ENCODE measurements at regions of chr11 and their contacts with region 1.

Region 1: DNA sequence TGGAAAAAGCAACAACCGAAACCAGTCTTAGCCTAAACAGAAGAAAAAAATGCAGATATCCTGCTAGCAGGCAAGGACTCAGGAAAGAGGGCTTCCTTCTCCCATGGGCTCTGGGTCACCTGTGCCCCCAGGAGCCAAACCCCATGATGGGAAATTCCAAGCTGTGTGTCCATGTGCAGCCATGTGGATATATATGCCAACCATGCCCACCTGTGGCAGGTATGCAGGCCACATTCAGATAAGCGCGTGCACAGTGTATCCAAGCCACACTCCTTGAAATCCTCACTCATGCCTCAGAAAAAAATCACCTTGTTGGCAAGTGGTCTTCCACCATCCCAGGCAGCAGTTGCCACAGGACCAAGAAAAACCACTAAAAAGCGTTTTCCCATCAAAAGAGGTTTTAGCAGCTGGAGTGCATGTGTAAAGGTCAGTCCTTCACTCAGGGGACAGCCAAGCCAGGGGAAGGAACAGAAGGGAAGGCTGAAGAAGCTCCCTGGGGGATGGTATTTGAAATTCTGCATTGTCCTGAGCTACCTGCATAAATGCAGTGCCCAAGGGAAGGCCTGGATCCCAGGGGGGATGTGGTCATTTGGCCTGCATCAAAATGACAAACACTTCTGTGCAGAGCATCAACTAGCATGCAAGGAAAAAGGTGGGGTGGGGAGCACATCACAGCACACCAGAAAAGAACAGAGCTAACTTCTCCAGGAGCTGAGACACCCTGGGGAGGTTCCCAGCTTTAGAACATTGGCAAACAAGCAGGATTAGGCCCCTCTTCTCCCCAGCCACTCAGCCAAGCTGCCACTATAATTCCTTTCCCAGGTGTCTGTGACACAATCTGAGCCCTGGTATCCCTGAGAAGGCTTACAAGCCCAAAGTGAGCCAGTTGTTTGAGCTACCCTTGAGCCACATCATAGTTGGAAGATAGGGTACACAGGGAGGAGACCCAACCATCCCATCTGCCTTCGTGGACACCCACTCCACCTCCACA is 76.2 kb downstream of the GALNT18 start:
- DNase-seq: no peak
- ATAC-seq: no peak

Region 2: DNA sequence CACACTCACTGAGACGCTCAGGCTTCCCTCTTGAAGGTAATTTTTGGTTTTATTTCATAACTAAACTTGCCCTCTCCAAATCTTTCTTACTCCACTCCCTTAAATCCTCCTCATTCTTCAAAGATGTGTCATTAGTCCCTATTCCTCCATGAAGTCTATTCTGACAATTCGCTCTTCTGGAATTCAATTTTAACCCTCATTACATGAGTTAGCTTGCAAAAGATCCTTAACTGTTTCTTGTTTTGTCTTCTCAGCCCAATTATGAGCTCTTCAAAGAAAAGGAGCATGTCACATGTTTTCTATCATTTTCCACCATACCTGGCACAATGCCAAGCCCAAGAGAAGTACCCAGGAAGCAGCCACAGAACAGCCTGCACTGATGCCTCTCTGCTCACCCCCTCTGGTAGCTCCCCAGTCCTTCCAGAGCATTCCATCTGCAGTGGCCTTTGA is 63.2 kb after region 1 on chr11:
- intact Hi-C with region 1: loop called (anchors 10 kb)
- DNase-seq: no peak
- ATAC-seq: no peak

Region 3: DNA sequence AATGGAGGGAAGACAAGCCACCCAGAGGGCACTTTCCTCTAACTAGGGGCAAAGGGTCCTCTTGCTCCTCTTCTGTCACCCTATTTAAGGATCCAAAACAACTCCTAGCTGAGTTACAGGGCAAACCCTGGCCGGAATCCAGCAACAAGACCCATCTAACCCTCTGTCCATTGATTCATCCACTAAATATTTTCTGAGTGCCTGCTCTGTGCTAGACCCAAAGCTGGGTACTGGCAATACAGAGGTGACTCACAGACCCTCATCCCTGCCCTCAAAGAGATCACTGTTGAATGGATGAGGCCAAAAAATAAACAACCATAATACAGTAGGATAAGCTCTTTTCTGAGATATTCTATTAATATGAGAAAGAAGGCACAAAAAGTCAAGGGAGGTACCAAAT is 80.5 kb after region 1 on chr11:
- intact Hi-C with region 1: no loop called
- DNase-seq: no peak
- ATAC-seq: no peak

Region 4: GRCh38 chr11:11731311-11732083 is 185.9 kb after region 1 on chr11:
- intact Hi-C with region 1: no loop called
- DNase-seq: peak; percentile 37
- ATAC-seq: no peak